HEK293 (cell line): ENCODE measurements at regions of chrX and their contacts with region 1.

Region 1: DNA sequence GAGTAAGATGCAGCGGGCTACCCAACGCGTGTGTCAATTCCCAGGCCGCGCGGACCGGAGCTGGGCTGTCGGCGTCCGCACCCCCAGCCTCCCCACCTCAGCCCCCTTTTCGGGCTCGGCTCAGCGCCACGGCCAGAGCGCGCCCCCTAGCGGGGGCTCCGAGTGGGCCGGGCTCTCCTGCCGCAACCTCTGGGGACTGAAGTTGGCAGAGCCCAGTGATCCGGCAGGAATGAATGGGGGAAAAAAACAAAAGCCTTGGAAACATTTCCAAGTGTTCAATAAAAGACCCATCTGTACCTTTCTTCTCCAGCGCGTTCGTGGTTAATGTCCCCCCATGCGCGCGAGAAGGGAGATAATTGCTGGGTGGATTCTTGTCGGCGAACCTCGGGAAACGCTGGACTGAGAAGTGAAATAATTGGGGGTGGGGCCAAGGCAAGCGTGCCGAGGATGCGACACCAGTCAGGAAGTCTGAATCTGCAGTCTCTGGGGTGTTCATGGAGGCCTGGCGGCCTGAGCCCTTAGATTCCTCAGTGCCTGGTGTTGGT is 5.2 kb upstream of the ARX start:
- H3K4me3 ChIP-seq: peak overlapping the region; percentile 40
- H3K27ac ChIP-seq: no peak overlapping the region; the same call in 1 of the 2 replicates
- H3K4me1 ChIP-seq: peaks cover 16% of the 10 kb centered on the region
- CTCF ChIP-seq: peak; percentile 74

Region 2: GRCh38 chrX:24838629-24839028 is 182.3 kb before region 1 on chrX:
- CTCF ChIA-PET with region 1: interaction called, 24 read pairs
- POLR2A ChIA-PET with region 1: no interaction called
- H3K4me3 ChIP-seq: no peak overlapping the region
- H3K27ac ChIP-seq: no peak overlapping the region
- H3K4me1 ChIP-seq: no peaks in the 10 kb centered on the region; the same call in 1 of the 2 replicates
- CTCF ChIP-seq: no peak

Region 3: GRCh38 chrX:25007059-25008053 is 13.6 kb before region 1 on chrX:
- CTCF ChIA-PET with region 1: interaction called, 21 read pairs
- POLR2A ChIA-PET with region 1: no interaction called
- H3K4me3 ChIP-seq: no peak overlapping the region
- H3K27ac ChIP-seq: no peak overlapping the region
- H3K4me1 ChIP-seq: no peaks in the 10 kb centered on the region
- CTCF ChIP-seq: no peak

Region 4: GRCh38 chrX:25131055-25131454 is 110.1 kb after region 1 on chrX:
- CTCF ChIA-PET with region 1: no interaction called
- POLR2A ChIA-PET with region 1: no interaction called
- H3K4me3 ChIP-seq: no peak overlapping the region
- H3K27ac ChIP-seq: no peak overlapping the region
- H3K4me1 ChIP-seq: no peaks in the 10 kb centered on the region
- CTCF ChIP-seq: no peak